Ascending aorta (tissue), 2 donors: ENCODE measurements at regions of chr1 and their contacts with region 1.

Region 1: DNA sequence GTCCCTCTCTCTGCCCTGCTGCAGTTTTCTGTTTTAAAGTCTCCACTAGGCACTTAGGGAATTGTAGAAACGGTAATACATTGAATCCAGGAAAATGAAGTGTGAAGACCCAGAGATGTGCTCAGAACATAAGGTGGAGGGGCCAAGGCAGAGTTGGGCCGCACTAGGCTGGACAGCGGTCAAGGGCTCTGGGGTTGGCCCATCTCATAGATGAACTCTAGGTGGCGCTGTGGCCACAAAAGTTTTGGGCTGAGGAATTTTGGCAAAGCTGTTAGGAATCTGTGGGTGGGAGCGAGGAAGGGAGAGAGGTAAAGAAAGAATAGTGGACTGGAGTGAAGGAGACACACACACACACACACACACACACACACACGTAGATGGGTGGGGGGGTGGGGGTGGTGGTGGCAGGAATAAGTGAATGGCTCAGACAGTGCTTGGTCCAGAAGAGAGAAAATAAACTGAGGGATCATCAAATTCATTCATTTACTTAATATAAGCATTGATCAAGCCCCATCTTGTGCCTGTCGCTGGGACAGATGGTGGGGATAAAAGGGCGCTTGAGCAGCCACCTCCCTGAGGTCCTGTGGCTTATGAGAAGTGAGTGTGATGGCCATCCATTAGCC is 258.5 kb downstream of the TRABD2B start:
- DNase-seq: peak in 1 of 2 donors; percentile 71
- H3K4me3 ChIP-seq: no peak overlapping the region
- H3K27ac ChIP-seq: no peak overlapping the region
- H3K4me1 ChIP-seq: no peaks in the 10 kb centered on the region
- H3K27me3 ChIP-seq: no peaks in the 10 kb centered on the region
- CTCF ChIP-seq: peak; percentile 65 to 84 (median 76)

Region 2: DNA sequence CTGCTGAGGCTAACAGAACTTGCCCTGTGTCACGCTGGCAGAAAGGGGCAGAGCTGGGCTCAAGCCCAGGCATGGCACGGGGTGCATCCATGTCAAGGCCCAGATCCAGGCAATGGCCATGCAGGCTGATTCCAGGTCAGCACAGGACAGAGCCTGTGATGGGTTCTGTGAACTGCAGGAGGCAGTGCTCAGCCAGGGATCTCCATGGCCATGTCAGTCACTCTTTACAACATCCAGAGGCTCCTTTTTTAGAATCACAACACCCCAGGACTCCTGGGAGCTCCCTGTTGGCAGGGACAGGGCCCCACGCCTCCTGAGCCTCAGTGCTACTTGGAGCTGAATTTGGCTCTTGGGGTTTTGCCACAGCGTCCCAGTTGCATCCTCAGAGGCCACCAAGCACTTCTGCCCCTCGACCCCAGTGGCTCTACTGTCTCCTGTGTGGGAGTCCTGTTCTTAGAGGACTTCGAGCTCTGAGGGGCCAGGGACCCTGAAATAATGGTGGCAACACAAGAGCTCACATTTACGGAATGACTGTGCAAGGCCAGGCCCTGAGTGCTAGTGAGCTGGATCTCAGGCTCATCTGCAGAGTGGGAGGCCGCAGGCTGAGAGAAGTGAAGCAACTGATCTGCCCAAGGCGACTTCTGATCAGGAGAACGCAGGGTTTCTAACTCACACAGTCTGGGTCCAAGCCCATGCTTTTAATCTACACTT is 47.0 kb after region 1 on chr1:
- intact Hi-C with region 1: loop called (anchors 5 kb)
- DNase-seq: peak in 1 of 2 donors; percentile 74
- H3K4me3 ChIP-seq: no peak overlapping the region
- H3K27ac ChIP-seq: peak overlapping the region; percentile 44 to 46
- H3K4me1 ChIP-seq: peaks cover 7 to 34% of the 10 kb centered on the region in 2 donors
- H3K27me3 ChIP-seq: no peaks in the 10 kb centered on the region
- CTCF ChIP-seq: peak; percentile 46 to 65 (median 63)

Region 3: DNA sequence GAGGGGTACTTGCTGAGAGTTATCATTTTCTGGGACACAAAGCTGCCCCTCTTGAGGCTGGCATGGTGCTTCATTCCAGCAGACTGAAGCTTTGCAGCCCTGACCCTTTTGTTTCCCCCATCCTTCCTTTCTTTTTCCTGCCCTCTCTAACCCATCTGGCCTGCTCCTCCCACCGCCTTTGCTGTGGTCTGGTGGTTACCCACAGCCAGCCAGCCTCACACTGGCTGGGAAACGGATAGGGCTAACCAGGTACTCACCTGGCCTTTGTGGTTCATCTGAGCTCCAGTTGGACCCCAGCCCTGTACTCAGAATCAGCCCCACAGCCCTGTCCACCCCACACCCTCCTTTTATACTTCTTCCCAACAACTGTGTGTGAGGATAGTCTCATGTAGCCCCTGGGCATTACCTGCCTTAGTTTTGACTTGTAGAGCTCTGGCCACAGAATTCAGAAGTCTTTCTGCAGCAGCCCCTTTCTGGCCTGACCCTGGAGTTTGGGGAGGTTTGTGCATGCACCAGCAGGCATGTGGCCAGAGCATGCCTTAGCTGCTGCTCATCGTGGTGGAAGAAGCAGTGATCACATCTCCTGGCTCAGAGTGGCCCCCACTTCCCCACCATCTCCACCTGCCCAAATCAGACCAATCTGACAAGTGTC is 120.5 kb after region 1 on chr1:
- intact Hi-C with region 1: no loop called
- DNase-seq: peak in 1 of 2 donors; percentile 30
- H3K4me3 ChIP-seq: no peak overlapping the region
- H3K27ac ChIP-seq: no peak overlapping the region
- H3K4me1 ChIP-seq: no peaks in the 10 kb centered on the region
- H3K27me3 ChIP-seq: no peaks in the 10 kb centered on the region
- CTCF ChIP-seq: no peak

Region 4: DNA sequence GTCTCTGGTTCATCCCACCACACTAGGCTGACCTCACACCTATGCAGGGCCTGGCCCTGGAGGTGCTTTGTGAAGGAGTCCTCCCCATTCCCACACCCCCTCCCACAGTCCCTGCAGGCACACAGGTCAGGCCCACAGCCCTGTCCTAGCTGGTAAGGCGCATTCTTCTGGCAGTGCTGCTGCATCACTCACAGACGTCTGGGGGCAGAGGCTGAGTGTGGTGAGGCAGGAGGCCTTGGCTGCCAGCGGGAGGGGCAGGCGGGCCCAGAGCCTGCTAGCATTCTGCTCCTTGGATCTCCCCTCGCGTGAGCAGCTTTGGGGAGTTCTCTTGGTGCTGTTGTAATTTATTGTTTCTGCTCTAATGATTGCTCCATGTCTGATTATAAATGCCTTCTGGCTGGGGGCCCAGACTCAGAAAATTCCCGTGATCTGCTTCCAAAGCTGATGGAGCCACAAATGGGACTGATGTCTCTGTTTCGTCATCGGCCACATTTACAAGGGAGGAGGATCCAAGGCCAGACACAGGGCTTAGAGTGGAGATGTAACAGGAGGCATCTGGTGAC is 195.7 kb after region 1 on chr1:
- intact Hi-C with region 1: loop called (anchors 5 kb)
- DNase-seq: peak in 1 of 2 donors; percentile 80
- H3K4me3 ChIP-seq: no peak overlapping the region
- H3K27ac ChIP-seq: peak overlapping the region; percentile 31 to 61
- H3K4me1 ChIP-seq: peaks cover 0 to 12% of the 10 kb centered on the region in 2 donors
- H3K27me3 ChIP-seq: no peaks in the 10 kb centered on the region
- CTCF ChIP-seq: no peak

Region 5: DNA sequence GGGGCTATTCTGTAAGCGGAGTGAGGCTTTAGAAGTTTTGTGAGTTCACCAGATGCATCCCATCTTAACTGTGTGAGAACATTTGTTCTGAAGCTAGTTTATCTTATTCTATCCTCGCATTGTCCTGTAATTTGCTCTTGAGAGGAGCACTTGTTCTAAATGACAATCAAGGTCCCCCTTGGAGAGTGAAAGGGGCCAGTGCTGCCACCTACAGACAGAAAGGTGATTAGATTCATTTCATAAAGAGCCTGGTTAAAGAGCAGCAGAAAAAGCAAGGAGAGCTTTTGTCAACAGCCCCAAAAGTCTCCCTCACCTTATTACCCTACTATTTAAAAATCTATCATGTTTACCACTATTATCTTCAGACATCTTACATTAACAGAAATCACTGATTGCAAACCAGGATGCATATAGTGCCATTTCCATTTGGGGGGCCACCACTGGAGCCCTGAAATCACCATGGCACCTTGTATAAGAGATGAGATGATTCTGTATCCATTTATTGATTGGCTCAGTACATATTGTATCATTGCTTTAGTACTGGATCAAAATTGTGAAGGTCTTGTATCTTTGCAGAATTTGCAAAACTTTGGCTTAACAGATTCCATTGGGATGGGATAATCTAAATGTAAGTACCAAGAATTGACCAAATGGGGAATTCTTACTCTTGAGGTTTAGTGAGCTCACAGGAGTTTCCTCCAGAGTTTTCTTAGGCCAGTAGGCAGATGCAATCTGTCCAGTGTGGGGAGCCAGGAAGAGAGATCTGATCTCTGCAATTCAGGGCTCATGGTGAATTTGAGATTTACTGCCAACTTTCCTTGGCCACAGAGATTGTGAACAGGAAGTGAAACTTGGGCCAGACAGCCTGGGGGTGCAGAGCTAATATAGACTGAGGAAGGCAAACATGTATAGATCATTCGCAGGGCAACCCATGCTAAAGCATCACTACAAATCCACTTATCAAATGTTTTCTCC is 322.8 kb after region 1 on chr1:
- intact Hi-C with region 1: loop called (anchors 5 kb)
- DNase-seq: peak in 1 of 2 donors; percentile 84
- H3K4me3 ChIP-seq: no peak overlapping the region
- H3K27ac ChIP-seq: no peak overlapping the region
- H3K4me1 ChIP-seq: peaks cover 0 to 6% of the 10 kb centered on the region in 2 donors
- H3K27me3 ChIP-seq: no peaks in the 10 kb centered on the region
- CTCF ChIP-seq: peak; percentile 53 to 81 (median 67)

Region 6: DNA sequence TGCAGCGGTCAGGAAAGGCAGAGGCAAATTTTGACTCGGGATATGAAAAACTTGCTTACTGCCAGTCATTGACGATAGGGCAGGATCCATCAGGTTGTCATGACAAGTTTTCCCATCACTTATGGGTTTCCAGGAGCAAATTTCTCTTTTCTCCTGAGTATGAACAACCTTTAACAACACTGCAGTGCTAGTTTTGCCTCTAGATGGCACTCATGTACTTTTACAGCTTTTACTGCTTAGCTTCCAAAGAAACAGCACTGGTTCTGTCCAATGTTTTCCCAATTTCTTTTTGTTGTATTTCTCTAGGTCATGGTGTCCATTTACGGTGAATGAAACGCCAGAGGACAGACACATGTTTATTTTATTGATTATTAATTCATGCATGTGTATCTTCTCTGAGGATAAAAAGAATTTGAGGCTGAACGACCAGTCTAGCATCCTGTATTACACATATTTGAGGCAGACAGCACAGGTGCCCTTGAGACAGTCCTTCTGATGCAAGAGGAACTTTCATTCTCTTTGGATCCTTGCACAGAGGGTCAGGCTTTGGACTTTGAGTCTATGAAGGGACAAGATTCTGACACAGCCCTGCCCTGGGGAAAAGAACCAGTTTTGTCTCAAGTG is 370.8 kb after region 1 on chr1:
- intact Hi-C with region 1: loop called (anchors 5 kb)
- DNase-seq: no peak
- H3K4me3 ChIP-seq: no peak overlapping the region
- H3K27ac ChIP-seq: no peak overlapping the region
- H3K4me1 ChIP-seq: no peaks in the 10 kb centered on the region
- H3K27me3 ChIP-seq: no peaks in the 10 kb centered on the region
- CTCF ChIP-seq: peak; percentile 52 to 87 (median 77)

Region 7: DNA sequence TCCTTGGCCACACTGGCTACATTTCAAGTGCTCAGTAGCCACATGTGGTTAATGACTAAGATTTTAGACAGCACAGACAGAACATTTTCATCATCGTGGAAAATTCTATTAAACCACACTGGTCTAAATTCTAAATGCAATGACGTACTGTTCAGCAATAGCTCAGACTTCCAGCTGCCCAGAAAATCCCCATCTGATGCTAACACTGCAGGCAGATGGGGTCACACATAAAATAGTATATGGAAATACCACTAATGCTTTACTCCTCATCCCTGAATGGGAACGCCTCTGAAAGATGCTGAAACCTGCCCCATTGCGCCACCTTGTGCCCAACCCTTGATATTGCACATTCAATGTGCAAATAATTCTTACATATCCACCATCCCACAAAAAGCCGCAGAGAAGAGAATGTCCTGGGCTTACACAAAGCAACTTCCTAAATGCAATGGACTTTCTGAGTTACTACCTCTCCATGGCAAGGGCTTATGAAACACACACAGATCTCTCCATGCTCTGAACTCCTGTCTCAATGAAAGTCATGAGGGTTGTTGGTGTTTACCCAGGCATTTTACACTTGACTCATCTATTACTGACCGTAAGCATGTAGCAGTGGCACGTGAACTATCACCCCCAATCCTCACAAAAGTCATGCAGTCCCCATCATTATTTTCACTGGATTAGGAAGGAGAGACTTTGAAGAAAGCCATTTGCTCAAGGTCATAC is 463.5 kb after region 1 on chr1:
- intact Hi-C with region 1: loop called (anchors 1 kb)
- DNase-seq: peak in 1 of 2 donors; percentile 78
- H3K4me3 ChIP-seq: no peak overlapping the region
- H3K27ac ChIP-seq: no peak overlapping the region
- H3K4me1 ChIP-seq: peaks cover 0 to 7% of the 10 kb centered on the region in 2 donors
- H3K27me3 ChIP-seq: no peaks in the 10 kb centered on the region
- CTCF ChIP-seq: peak; percentile 66 to 82 (median 76)